ENCODE measurements at regions of chr4 and their contacts with region 1.

Region 1: GRCh38 chr4:121668368-121669162 is 28.2 kb downstream of the ANXA5 start:
- DNase-seq: no peak
- ATAC-seq: peak; percentile 33 to 52
- H3K4me3 ChIP-seq: no peak overlapping the region
- H3K27ac ChIP-seq: no peak overlapping the region
- H3K4me1 ChIP-seq: no peaks in the 10 kb centered on the region
- H3K27me3 ChIP-seq: no peaks in the 10 kb centered on the region
- CTCF ChIP-seq: no peak
- POLR2A ChIP-seq: no peak

Region 2: DNA sequence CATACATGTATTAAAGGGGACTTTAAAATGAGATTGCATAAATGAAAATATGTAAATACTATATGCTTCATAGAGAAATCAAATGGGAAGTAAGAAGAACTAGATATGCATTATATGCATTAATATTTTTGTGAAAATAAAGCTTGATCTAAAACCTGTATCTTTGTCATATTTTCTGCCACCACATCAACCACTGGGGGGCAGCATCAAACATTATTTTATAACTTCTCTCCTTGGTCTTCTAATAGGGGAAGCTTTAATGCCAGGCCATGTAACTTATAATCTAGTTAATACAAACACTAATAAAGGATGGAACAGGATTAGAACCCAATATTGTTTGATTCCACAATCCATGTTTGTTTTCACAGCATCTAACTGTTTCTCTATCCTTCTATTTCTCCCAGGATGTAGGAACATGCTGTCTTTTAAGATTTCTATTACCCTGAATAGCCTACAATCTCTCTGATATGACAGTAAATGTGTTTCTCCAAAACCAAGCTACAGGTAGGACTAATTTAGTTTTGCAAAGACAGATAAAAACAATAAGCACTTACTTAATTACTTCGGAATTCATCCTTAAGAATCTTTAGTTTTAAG is 297.7 kb before region 1 on chr4:
- in situ Hi-C with region 1: loop called in 1 of 4 experiments (anchors 10 kb)
- intact Hi-C with region 1: no loop called
- DNase-seq: no peak
- ATAC-seq: no peak
- H3K4me3 ChIP-seq: no peak overlapping the region
- H3K27ac ChIP-seq: no peak overlapping the region
- H3K4me1 ChIP-seq: no peaks in the 10 kb centered on the region
- H3K27me3 ChIP-seq: no peaks in the 10 kb centered on the region
- CTCF ChIP-seq: peak in 3 of 5 experiments; percentile 15 to 56 (median 40)
- POLR2A ChIP-seq: no peak

Measured in gastrocnemius medialis (tissue), 4 donors.